Breast epithelium (tissue), 4 donors: ENCODE measurements at regions of chr9 and their contacts with region 1.

Region 1: DNA sequence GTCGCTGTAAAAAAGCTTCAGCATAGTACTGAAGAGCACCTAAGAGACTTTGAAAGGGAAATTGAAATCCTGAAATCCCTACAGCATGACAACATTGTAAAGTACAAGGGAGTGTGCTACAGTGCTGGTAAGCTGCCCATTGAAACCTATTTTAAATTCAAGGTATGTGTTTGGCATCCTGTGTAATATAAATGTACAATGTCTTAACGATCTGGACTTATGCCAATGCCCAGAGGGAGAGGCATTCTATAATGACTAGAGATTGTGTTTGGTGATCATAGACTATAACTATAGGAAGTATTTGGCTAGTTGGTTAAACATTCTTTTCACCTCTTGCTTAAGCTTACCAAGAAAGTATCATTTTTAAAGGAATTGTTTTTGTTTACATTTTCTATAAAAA is 95.7 kb downstream of the INSL6 start:
- DNase-seq: no peak
- H3K4me3 ChIP-seq: no peak overlapping the region
- H3K27ac ChIP-seq: no peak overlapping the region
- H3K4me1 ChIP-seq: no peaks in the 10 kb centered on the region
- H3K27me3 ChIP-seq: no peaks in the 10 kb centered on the region
- CTCF ChIP-seq: no peak
- POLR2A ChIP-seq: no peak

Region 2: GRCh38 chr9:5110867-5111713 is 21.4 kb after region 1 on chr9:
- intact Hi-C with region 1: loop called (anchors 2 kb)
- DNase-seq: no peak
- H3K4me3 ChIP-seq: no peak overlapping the region
- H3K27ac ChIP-seq: no peak overlapping the region
- H3K4me1 ChIP-seq: no peaks in the 10 kb centered on the region
- H3K27me3 ChIP-seq: no peaks in the 10 kb centered on the region
- CTCF ChIP-seq: no peak
- POLR2A ChIP-seq: no peak